Endothelial cell of umbilical vein (primary cell): ENCODE measurements at regions of chr7 and their contacts with region 1.

Region 1: DNA sequence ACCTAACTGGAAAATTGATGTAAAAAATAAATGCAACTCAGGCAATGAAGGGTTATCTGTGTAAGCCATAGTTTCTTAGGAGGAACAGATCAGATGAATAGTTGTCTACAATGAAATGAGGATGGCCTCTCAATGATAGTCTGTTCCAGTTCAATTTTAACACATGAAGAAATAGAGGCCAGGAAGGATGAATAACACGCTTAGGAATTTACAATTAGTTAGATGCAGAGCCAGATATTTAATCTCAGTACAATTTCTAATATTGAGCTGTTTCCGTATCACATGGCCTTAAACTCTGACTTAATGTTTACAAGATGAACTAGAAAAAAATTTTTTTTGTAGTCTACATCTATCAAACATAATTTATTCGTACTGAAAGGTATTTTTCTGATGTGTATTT is 176.6 kb downstream of the GALNT11 start:
- DNase-seq: peak; percentile 55
- H3K4me3 ChIP-seq: no peak overlapping the region
- H3K27ac ChIP-seq: peak overlapping the region; percentile 61
- H3K4me1 ChIP-seq: peaks cover 25% of the 10 kb centered on the region
- H3K27me3 ChIP-seq: no peaks in the 10 kb centered on the region
- CTCF ChIP-seq: no peak
- POLR2A ChIP-seq: no peak

Region 2: GRCh38 chr7:152709287-152710152 is 507.5 kb after region 1 on chr7:
- CTCF ChIA-PET with region 1: interaction called, 14 read pairs
- POLR2A ChIA-PET with region 1: no interaction called
- dilution Hi-C with region 1: no loop called
- intact Hi-C with region 1: no loop called
- DNase-seq: no peak
- H3K4me3 ChIP-seq: no peak overlapping the region
- H3K27ac ChIP-seq: no peak overlapping the region
- H3K4me1 ChIP-seq: no peaks in the 10 kb centered on the region
- H3K27me3 ChIP-seq: no peaks in the 10 kb centered on the region
- CTCF ChIP-seq: no peak
- POLR2A ChIP-seq: no peak